ENCODE measurements at regions of chr9 and their contacts with region 1.

Region 1: DNA sequence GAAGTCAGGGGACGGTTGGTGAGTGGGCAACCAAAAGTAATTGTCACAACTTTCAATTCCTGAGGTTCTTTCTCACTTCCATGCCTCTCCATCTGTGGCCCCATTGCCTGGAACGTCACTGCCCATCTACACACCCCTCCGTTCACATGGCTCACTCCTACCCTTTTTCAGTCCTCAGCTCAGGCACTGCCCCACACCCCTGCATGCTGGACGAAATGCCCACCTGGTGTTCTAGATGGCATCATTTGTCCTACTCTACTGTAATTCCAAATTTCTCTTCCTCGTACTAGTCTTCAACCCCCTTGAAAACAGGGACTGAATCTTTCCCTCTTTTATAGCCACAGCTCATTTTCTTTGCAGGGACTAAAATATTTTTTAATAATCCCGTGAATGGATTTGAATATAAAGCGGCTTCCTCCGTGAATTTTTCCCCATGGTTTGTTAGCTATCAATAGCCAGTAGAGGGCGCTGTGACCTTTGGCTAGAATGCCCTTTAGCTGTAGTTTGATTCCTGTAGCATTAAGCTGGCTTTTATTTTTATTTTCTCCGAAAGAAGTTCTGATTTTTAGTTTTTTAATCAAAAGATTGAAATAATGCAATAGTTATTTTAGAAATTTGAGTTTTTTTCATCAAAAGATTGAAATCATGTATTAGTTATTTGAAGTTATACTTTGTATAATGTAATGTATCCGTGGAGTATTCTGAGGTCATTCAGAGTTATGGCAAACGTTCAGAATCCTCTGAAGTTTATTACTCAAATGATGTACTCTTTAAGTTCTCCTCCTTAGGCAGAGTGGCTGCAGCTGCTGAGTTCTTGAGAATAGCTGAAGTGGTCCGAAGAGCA is 232.1 kb downstream of the SH3GL2 start:
- DNase-seq: peak in 4 of 5 donors; percentile 29 to 48 (median 35)
- ATAC-seq: peak in 1 of 4 donors; percentile 47
- H3K4me3 ChIP-seq: no peak overlapping the region
- H3K27ac ChIP-seq: no peak overlapping the region
- H3K4me1 ChIP-seq: no peaks in the 10 kb centered on the region
- H3K27me3 ChIP-seq: peaks cover 0 to 14% (median 0%) of the 10 kb centered on the region in 9 donors
- CTCF ChIP-seq: peak; percentile 72 to 93 (median 84)
- POLR2A ChIP-seq: no peak

Region 2: GRCh38 chr9:18149471-18150011 is 338.6 kb after region 1 on chr9:
- intact Hi-C with region 1: loop called in 2 of 10 experiments (anchors 5 kb)
- DNase-seq: no peak
- ATAC-seq: no peak
- H3K4me3 ChIP-seq: no peak overlapping the region
- H3K27ac ChIP-seq: no peak overlapping the region
- H3K4me1 ChIP-seq: no peaks in the 10 kb centered on the region
- H3K27me3 ChIP-seq: no peaks in the 10 kb centered on the region
- CTCF ChIP-seq: peak in 1 of 12 donors; percentile 12
- POLR2A ChIP-seq: no peak

Region 3: DNA sequence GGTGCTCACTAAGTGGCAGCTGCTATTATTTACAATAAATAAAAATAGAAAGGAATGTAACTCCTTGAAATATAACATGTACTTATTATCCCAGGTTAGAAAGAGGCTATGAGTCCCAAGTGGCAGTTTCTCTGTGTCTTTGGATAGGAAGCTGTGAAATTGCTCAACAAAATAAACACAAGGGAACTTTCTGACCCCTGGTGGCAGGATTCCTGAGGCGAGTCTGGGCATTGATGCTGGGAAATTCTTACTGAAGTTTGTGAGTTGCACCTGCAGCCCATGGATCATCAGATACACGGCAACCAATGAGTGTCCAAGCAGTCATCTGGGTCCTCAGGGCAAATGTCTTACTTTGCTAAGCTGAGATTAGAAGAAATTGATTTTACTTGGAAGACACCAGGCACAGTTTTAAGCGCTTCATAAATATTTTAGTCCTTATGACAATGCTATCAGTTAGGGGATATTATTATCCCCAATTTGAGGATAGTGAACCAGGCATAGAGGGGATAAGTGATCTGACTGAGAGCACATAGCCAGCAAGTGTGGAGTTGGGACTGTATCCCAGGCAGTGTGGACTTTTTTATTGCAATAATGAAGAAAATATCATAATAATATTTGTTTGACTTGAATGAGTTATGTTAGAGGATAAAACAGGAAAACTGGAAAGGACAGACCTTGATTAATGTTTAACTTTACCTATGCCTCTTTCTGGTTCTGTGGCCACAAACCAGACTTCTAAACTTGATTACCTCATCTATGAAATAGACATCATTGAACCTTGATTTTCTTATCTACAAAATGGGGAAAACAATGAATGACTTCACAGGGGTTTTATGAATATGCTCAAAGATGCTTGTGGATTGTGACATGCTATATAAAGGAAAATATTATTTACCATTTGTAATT is 397.5 kb after region 1 on chr9:
- intact Hi-C with region 1: loop called (anchors 1 to 5 kb)
- DNase-seq: peak in 3 of 5 donors; percentile 13 to 26 (median 23)
- ATAC-seq: peak in 2 of 4 donors; percentile 51 to 52
- H3K4me3 ChIP-seq: no peak overlapping the region
- H3K27ac ChIP-seq: no peak overlapping the region
- H3K4me1 ChIP-seq: no peaks in the 10 kb centered on the region
- H3K27me3 ChIP-seq: no peaks in the 10 kb centered on the region
- CTCF ChIP-seq: peak; percentile 23 to 62 (median 50)
- POLR2A ChIP-seq: no peak

Region 4: GRCh38 chr9:18215626-18216025 is 404.7 kb after region 1 on chr9:
- intact Hi-C with region 1: loop called in 9 of 10 experiments (anchors 1 to 5 kb)
- DNase-seq: no peak
- ATAC-seq: no peak
- H3K4me3 ChIP-seq: no peak overlapping the region
- H3K27ac ChIP-seq: no peak overlapping the region
- H3K4me1 ChIP-seq: no peaks in the 10 kb centered on the region
- H3K27me3 ChIP-seq: no peaks in the 10 kb centered on the region
- CTCF ChIP-seq: no peak
- POLR2A ChIP-seq: no peak